ENCODE measurements at regions of chr12 and their contacts with region 1.

Region 1: GRCh38 chr12:32755654-32756475 is at the start of gene YARS2:
- DNase-seq: peak; percentile 96
- ATAC-seq: peak; percentile 80
- H3K4me3 ChIP-seq: peak within 1 kb of the TSS; percentile 93
- H3K27ac ChIP-seq: peak within 1 kb of the TSS; percentile 85
- H3K4me1 ChIP-seq: peaks cover 22% of the 10 kb centered on the region
- H3K27me3 ChIP-seq: no peaks in the 10 kb centered on the region
- CTCF ChIP-seq: peak; percentile 86
- total RNA-seq, gene YARS2: 31.4 and 37.4 TPM in 2 replicates

Region 2: GRCh38 chr12:32365473-32366064 is 390.3 kb before region 1 on chr12:
- CTCF ChIA-PET with region 1: no interaction called
- POLR2A ChIA-PET with region 1: no interaction called
- intact Hi-C with region 1: loop called (anchors 1 kb)
- DNase-seq: peak; percentile 72
- ATAC-seq: peak; percentile 55
- H3K4me3 ChIP-seq: no peak overlapping the region
- H3K27ac ChIP-seq: no peak overlapping the region
- H3K4me1 ChIP-seq: peaks cover 4% of the 10 kb centered on the region; the same call in 1 of the 2 replicates
- H3K27me3 ChIP-seq: no peaks in the 10 kb centered on the region
- CTCF ChIP-seq: peak; percentile 85

Region 3: GRCh38 chr12:32679091-32679919 is 76.6 kb before region 1 on chr12 and contains the start of gene DNM1L:
- CTCF ChIA-PET with region 1: no interaction called
- POLR2A ChIA-PET with region 1: interaction called, 3 read pairs
- intact Hi-C with region 1: loop called (anchors 2 kb)
- DNase-seq: peak; percentile 93
- ATAC-seq: peak; percentile 93
- H3K4me3 ChIP-seq: peak within 1 kb of the TSS; percentile 88
- H3K27ac ChIP-seq: peak within 1 kb of the TSS; percentile 36
- H3K4me1 ChIP-seq: peaks cover 5% of the 10 kb centered on the region
- H3K27me3 ChIP-seq: no peaks in the 10 kb centered on the region
- CTCF ChIP-seq: no peak
- total RNA-seq, gene DNM1L: 29.9 and 38.7 TPM in 2 replicates

Region 4: DNA sequence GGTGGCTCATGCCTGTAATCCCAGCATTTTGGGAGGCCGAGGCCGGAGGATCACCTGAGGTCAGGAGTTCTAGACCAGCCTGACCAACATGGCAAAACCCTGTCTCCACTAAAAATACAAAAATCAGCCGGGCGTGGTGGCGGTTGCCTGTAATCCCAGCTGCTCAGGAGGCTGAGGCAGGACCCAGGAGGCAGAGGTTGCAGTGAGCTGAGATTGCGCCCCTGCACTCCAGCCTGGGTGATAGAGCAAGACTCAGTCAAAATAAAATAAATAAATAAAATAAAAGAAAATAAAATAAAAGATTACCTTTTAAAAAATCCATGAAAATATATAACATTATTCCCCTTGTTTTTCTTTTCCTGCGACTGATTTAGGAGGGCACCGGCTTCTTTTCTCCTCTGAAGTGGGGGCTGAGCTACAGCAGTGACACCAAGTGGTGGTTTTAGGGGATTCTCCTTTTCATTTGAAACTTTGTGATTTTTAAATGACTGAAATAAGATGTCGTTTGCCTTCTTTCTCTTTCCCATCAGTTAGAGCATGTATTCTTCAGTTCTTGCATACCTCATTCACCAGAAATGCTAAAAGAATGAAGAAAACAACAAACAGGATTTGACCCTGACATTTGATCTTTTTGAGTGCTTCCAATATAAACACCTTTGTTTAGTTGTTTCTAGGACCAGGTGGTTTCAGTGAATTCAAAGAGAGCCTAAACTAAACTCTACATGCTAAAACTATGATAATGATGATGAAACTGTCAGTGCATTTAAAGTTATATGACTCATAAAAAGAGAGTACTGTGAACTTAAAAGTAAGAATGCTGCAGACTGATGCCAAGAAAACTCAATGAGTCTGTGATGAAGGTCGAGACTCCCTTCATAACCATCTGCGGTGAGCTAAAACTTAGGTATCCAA is 163.3 kb after region 1 on chr12:
- CTCF ChIA-PET with region 1: interaction called, 6 read pairs
- POLR2A ChIA-PET with region 1: interaction called, 4 read pairs
- intact Hi-C with region 1: loop called (anchors 1 kb)
- DNase-seq: peak; percentile 72
- ATAC-seq: peak; percentile 17
- H3K4me3 ChIP-seq: no peak overlapping the region
- H3K27ac ChIP-seq: peak overlapping the region; percentile 97
- H3K4me1 ChIP-seq: peaks cover 48% of the 10 kb centered on the region
- H3K27me3 ChIP-seq: no peaks in the 10 kb centered on the region
- CTCF ChIP-seq: peak; percentile 54

Region 5: DNA sequence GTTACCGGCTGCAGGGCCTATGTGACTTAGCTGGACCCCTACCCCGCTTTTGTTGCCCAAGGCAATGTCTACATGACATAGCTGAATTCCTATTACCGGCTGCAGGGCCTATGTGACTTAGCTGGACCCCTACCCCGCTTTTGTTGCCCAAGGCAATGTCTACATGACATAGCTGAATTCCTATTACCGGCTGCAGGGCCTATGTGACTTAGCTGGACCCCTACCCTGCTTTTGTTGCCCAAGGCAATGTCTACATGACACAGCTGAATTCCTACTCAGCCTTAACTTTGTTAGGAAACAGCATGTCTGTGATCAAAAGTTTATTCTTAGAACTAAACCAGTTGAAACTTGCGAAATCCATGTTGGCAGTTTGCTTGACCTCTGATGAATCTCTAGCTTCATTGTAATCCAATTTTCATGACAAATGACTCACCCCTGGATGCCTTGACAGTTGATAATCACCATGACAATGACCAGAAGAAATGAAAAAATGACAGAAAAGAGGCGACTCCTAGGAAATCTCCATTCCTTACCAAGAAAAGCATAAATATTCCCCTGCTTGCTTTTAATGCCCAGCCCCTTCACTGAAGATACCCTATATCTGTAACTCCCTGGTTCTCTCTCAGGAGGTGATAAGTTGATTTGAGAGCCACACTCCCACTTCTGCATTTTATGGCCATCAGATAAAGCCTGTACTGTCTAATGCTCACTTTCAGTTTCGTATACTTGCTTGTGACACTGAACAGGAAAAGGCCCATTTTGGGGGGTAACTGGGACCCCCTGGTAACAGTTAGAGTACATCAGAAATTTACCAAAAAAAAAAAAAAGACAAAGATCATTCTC is 832.2 kb after region 1 on chr12:
- CTCF ChIA-PET with region 1: no interaction called
- POLR2A ChIA-PET with region 1: no interaction called
- intact Hi-C with region 1: loop called (anchors 5 kb)
- DNase-seq: peak; percentile 93
- ATAC-seq: peak; percentile 72
- H3K4me3 ChIP-seq: peak overlapping the region; percentile 63
- H3K27ac ChIP-seq: peak overlapping the region; percentile 100
- H3K4me1 ChIP-seq: peaks cover 39% of the 10 kb centered on the region
- H3K27me3 ChIP-seq: no peaks in the 10 kb centered on the region
- CTCF ChIP-seq: no peak